Activated CD8-positive, alpha-beta T cell treated with anti-CD3 and anti-CD28 coated beads for 36 hours (primary cell): ENCODE measurements at regions of chr12 and their contacts with region 1.

Region 1: GRCh38 chr12:47391566-47391965 is 311.8 kb upstream of the AMIGO2 start:
- DNase-seq: peak; percentile 93
- ATAC-seq: peak; percentile 75
- H3K4me3 Mint-ChIP-seq: peak overlapping the region; percentile 72
- H3K27ac Mint-ChIP-seq: peak overlapping the region; percentile 100
- H3K4me1 Mint-ChIP-seq: peaks cover 85% of the 10 kb centered on the region
- H3K27me3 Mint-ChIP-seq: no peaks in the 10 kb centered on the region
- CTCF ChIP-seq: no peak

Region 2: DNA sequence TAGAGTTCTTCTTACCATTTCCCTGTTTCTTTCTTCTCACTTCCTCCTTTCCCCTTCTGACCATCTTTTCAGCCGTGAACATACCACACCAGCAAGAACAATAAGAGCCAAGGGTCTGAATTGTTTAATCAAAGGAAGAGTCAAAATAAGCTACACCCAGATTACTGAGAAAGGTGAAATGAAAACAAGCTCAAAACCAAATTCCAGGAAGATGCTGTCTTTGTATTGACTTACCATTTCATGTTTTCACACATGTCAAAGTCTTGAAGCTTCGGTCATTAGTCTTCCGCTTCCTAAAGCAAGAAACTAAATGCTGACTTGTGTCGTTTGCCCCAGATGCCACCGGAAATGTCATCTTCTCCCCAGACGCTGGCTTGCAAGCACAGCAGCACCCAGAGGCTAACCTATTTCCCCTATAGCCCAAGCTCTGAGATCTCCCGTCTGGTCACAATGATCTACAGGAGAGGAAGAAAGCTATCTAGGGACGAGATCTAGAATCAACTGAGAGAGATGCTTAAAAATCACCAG is 175.4 kb before region 1 on chr12:
- CTCF ChIA-PET with region 1: interaction called, 19 read pairs
- POLR2A ChIA-PET with region 1: interaction called, 37 read pairs
- intact Hi-C with region 1: loop called (anchors 2 kb)
- DNase-seq: peak; percentile 87
- ATAC-seq: peak; percentile 52
- H3K4me3 Mint-ChIP-seq: peak overlapping the region; percentile 79
- H3K27ac Mint-ChIP-seq: peak overlapping the region; percentile 96
- H3K4me1 Mint-ChIP-seq: peaks cover 10% of the 10 kb centered on the region
- H3K27me3 Mint-ChIP-seq: no peaks in the 10 kb centered on the region
- CTCF ChIP-seq: no peak

Region 3: GRCh38 chr12:47356129-47356700 is 35.4 kb before region 1 on chr12:
- CTCF ChIA-PET with region 1: interaction called, 6 read pairs
- POLR2A ChIA-PET with region 1: interaction called, 20 read pairs
- intact Hi-C with region 1: loop called (anchors 2 kb)
- DNase-seq: peak; percentile 56
- ATAC-seq: peak; percentile 67
- H3K4me3 Mint-ChIP-seq: peak overlapping the region; percentile 53
- H3K27ac Mint-ChIP-seq: peak overlapping the region; percentile 99
- H3K4me1 Mint-ChIP-seq: peaks cover 80% of the 10 kb centered on the region
- H3K27me3 Mint-ChIP-seq: no peaks in the 10 kb centered on the region
- CTCF ChIP-seq: no peak

Region 4: GRCh38 chr12:47370420-47370819 is 21.1 kb before region 1 on chr12:
- CTCF ChIA-PET with region 1: interaction called, 7 read pairs
- POLR2A ChIA-PET with region 1: interaction called, 10 read pairs
- intact Hi-C with region 1: no loop called
- DNase-seq: no peak
- ATAC-seq: no peak
- H3K4me3 Mint-ChIP-seq: no peak overlapping the region
- H3K27ac Mint-ChIP-seq: no peak overlapping the region
- H3K4me1 Mint-ChIP-seq: peaks cover 17% of the 10 kb centered on the region
- H3K27me3 Mint-ChIP-seq: no peaks in the 10 kb centered on the region
- CTCF ChIP-seq: no peak

Region 5: GRCh38 chr12:47378907-47379306 is 12.7 kb before region 1 on chr12:
- CTCF ChIA-PET with region 1: interaction called, 5 read pairs
- POLR2A ChIA-PET with region 1: interaction called, 15 read pairs
- intact Hi-C with region 1: no loop called
- DNase-seq: no peak
- ATAC-seq: no peak
- H3K4me3 Mint-ChIP-seq: no peak overlapping the region
- H3K27ac Mint-ChIP-seq: peak overlapping the region; percentile 72
- H3K4me1 Mint-ChIP-seq: peaks cover 55% of the 10 kb centered on the region
- H3K27me3 Mint-ChIP-seq: no peaks in the 10 kb centered on the region
- CTCF ChIP-seq: no peak

Region 6: DNA sequence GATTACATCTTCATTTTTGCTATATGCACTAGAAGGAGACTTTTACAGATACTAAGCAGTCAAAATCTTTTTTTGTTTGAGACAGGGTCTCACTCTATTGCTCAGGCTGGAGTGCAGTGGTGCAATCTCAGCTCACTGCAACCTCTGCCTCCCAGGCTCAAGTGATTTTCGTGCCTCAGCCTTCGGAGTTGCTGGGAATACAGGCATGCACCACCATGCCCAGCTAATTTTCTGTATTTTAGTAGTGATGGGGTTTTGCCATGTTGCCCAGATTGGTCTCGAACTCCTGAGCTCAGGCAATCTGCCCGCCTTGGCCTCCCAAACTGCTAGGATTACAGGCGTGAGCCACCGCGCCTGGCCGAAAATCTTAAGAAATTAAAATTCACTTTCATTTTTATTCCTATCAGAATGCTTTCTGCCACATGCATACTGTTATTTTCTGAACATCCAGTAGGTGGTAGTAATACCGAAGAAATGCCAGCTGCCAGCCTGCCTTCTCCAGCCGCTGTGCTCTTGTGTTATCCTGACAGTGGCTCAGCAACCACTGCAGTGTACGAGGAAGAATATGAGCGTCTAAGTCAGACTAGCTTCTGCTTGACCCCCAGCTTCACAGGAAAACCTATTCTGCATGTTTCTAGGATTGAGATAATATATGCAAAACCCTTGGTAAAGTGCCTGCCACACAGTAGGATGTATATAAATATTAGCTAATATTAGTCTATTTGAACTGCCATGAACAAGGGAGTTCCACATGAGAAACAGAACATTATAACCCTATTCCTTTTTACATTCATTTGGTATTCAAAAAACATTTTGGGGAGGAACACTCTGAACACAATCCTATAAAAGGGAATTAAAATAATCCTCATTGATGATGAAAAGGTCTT is 260.0 kb after region 1 on chr12:
- CTCF ChIA-PET with region 1: no interaction called
- POLR2A ChIA-PET with region 1: no interaction called
- intact Hi-C with region 1: no loop called
- DNase-seq: peak; percentile 62
- ATAC-seq: peak; percentile 98
- H3K4me3 Mint-ChIP-seq: no peak overlapping the region
- H3K27ac Mint-ChIP-seq: no peak overlapping the region
- H3K4me1 Mint-ChIP-seq: peaks cover 12% of the 10 kb centered on the region
- H3K27me3 Mint-ChIP-seq: no peaks in the 10 kb centered on the region
- CTCF ChIP-seq: peak; percentile 81

Region 7: DNA sequence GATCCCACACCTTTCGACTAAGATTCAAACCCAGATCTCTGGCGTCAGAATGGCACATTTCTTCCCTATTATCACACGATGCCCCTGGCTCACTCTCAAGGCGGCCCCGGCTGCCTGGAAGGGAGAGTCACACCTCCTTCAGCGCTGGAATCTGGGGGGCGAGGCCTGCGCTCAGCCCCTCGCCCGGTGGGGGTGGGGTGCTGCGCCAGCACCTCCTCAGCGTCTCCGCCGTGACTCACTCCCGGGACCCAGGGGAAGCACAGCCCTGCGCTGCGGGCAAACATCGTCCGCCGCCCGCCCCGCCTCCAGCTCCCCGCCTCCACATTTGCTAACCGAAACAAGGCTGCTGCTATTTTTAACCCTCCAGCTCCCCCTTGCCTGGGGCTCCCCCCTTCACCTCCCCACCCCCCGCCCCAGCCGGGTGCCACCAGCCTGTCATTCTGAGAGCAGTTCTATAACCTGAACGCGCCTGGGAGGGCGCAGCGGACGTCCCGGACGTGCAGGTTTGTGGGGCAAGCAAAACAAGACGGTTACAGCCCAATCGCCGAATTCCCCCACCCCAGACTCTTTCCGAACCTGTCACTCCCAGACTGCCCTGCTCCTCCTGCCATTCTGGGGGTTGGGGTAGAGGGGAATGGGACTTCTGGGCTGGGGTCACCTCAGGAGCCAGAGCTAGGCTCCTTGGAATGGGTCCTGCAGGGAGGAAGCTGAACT is 421.4 kb after region 1 on chr12:
- CTCF ChIA-PET with region 1: no interaction called
- POLR2A ChIA-PET with region 1: no interaction called
- intact Hi-C with region 1: no loop called
- DNase-seq: peak; percentile 98
- ATAC-seq: peak; percentile 68
- H3K4me3 Mint-ChIP-seq: peak overlapping the region; percentile 86
- H3K27ac Mint-ChIP-seq: peak overlapping the region; percentile 98
- H3K4me1 Mint-ChIP-seq: peaks cover 63% of the 10 kb centered on the region
- H3K27me3 Mint-ChIP-seq: no peaks in the 10 kb centered on the region
- CTCF ChIP-seq: no peak